Ascending aorta (tissue), 2 donors: ENCODE measurements at regions of chr1 and their contacts with region 1.

Region 1: GRCh38 chr1:178542560-178543356 is 29.8 kb downstream of the TEX35 start:
- DNase-seq: peak; percentile 39 to 95
- H3K4me3 ChIP-seq: peak overlapping the region; percentile 92 to 96
- H3K27ac ChIP-seq: peak overlapping the region; percentile 69 to 72
- H3K4me1 ChIP-seq: peaks cover 0 to 6% of the 10 kb centered on the region in 2 donors
- H3K27me3 ChIP-seq: no peaks in the 10 kb centered on the region
- CTCF ChIP-seq: peak; percentile 90 to 99 (median 98)

Region 2: GRCh38 chr1:178310685-178311105 is 232.1 kb before region 1 on chr1:
- intact Hi-C with region 1: no loop called
- DNase-seq: no peak
- H3K4me3 ChIP-seq: no peak overlapping the region
- H3K27ac ChIP-seq: no peak overlapping the region
- H3K4me1 ChIP-seq: peaks cover 0 to 6% of the 10 kb centered on the region in 2 donors
- H3K27me3 ChIP-seq: no peaks in the 10 kb centered on the region
- CTCF ChIP-seq: peak; percentile 62 to 72 (median 67)

Region 3: DNA sequence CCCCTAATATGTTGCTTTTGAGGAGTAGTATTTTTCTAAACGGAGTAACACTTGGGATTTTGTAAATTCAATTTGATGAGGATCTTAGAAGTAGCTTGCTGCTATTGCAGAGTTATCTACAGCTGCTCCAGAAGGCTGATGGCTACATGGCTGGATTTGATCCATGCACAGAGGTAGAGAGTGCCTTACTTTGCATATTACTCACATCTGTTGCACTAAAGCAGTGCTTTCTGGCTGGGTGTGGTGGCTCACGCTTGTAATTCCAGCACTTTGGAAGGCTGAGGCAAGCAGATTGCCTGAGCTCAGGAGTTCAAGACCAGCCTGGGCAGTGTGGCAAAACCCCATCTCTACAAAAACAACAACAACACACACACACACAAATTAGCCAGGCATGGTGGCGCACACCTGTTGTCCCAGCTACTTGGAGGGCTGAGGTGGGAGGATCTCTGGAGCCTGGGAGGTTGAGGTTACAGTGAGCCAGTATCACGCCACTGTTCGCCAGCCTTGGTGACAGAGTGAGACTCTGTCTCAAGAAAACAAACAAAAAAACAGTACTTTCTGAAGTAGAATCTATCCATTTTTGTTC is 206.9 kb after region 1 on chr1:
- intact Hi-C with region 1: loop called (anchors 1 kb)
- DNase-seq: no peak
- H3K4me3 ChIP-seq: no peak overlapping the region
- H3K27ac ChIP-seq: no peak overlapping the region
- H3K4me1 ChIP-seq: no peaks in the 10 kb centered on the region
- H3K27me3 ChIP-seq: no peaks in the 10 kb centered on the region
- CTCF ChIP-seq: no peak